CD14-positive monocyte (primary cell): ENCODE measurements at regions of chr19 and their contacts with region 1.

Region 1: DNA sequence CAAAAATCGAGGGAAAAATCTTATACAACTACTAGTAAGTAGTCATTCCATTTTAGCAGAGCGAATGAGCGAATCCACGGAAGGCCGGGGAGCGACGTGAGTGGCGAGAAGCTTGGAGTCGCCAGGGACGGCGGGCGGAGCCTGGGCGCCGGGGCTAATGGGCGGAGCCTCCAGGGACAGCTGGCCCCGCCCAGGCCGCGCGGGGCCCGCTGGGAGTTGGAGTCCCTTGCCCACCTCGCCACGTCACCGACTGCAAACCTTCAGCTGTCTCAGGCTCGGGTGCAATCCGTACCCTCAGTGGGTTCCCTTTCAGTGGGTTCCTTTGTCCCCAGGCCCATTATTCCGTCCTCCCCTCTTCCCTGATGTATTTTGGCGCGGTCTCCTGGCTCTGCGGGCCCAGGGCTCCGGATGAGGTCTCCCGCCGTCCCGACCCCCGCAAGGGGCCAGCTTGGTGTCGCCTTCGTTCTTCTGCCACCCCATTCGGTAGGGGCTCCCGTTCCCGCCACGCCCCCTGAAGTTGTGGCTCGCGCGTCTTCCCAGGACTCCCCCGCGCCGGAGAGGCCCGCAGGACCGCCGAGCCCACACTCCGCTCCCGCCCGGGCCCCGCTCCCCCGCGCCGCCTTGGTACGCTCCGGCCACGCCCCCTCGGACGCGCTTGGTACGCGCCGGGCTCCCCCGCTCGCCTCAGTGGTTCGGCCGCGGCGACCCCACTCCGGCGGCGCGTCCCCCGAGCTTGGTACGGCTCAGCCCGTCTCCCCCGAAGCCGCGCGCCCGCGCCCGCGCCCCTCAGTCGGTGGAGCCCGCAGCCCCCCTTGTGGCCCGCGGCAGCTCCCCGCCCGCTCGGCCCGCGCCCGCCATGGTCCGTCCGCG is at the start of gene PTOV1:
- DNase-seq: peak; percentile 88 to 90 (median 88)
- H3K4me3 ChIP-seq: peak within 1 kb of the TSS; percentile 84 to 99 (median 96)
- H3K4me3 Mint-ChIP-seq: peak within 1 kb of the TSS; percentile 88 to 92
- H3K27ac ChIP-seq: peak within 1 kb of the TSS; percentile 95 to 97
- H3K27ac Mint-ChIP-seq: peak within 1 kb of the TSS; percentile 93 to 99 (median 96)
- H3K4me1 ChIP-seq: peaks cover 32 to 40% of the 10 kb centered on the region in 2 donors
- H3K4me1 Mint-ChIP-seq: peaks cover 42% of the 10 kb centered on the region
- H3K27me3 ChIP-seq: peaks cover 7 to 12% of the 10 kb centered on the region in 2 donors
- H3K27me3 Mint-ChIP-seq: peaks cover 14 to 17% (median 15%) of the 10 kb centered on the region in 3 donors
- CTCF ChIP-seq: no peak
- polyA plus RNA-seq, gene PTOV1: 18.3 to 67.9 (median 31.2) TPM

Region 2: DNA sequence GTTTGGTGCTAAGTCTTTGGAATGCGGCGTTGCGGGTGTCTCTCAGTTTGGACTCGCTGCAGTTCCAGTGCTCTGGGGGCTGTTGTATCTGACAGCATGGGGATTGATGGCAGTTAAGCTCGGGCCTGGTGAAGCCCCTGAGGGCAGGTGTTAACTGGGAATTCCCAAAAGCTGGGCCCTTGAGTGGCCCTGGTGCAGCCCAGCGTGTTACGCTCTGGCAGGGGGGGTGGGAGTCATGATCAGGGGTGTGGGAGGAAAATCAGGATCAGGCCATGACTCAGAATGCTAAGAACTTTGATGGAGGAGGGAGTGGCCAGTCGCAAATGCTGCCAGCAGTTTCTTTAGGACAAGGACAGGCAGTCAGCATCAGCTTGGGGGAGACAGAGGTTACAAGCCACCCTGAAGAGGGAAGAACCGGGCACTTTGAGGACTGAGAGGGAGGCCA is 64.3 kb before region 1 on chr19:
- intact Hi-C with region 1: no loop called
- DNase-seq: no peak
- H3K4me3 ChIP-seq: no peak overlapping the region
- H3K4me3 Mint-ChIP-seq: no peak overlapping the region
- H3K27ac ChIP-seq: peak overlapping the region in 1 of 2 donors; percentile 11
- H3K27ac Mint-ChIP-seq: peak overlapping the region in 2 of 7 donors; percentile 32 to 50
- H3K4me1 ChIP-seq: peaks cover 10 to 12% of the 10 kb centered on the region in 2 donors
- H3K4me1 Mint-ChIP-seq: peaks cover 11% of the 10 kb centered on the region
- H3K27me3 ChIP-seq: no peaks in the 10 kb centered on the region
- H3K27me3 Mint-ChIP-seq: no peaks in the 10 kb centered on the region
- CTCF ChIP-seq: no peak

Region 3: GRCh38 chr19:49817964-49818648 is 32.6 kb before region 1 on chr19 and contains the start of gene MED25:
- intact Hi-C with region 1: loop called (anchors 2 to 5 kb)
- DNase-seq: peak; percentile 81 to 89 (median 83)
- H3K4me3 ChIP-seq: peak within 1 kb of the TSS; percentile 70 to 100 (median 89)
- H3K4me3 Mint-ChIP-seq: peak within 1 kb of the TSS; percentile 96 to 100
- H3K27ac ChIP-seq: peak within 1 kb of the TSS; percentile 75 to 93
- H3K27ac Mint-ChIP-seq: peak within 1 kb of the TSS; percentile 97 to 100 (median 99)
- H3K4me1 ChIP-seq: peaks cover 23 to 27% of the 10 kb centered on the region in 2 donors
- H3K4me1 Mint-ChIP-seq: peaks cover 22% of the 10 kb centered on the region
- H3K27me3 ChIP-seq: no peaks in the 10 kb centered on the region
- H3K27me3 Mint-ChIP-seq: peaks cover 0 to 8% (median 0%) of the 10 kb centered on the region in 3 donors
- CTCF ChIP-seq: peak; percentile 23
- polyA plus RNA-seq, gene MED25: 13.9 to 52.9 (median 18.5) TPM

Region 4: GRCh38 chr19:49968279-49968922 is 117.7 kb after region 1 on chr19:
- intact Hi-C with region 1: no loop called
- DNase-seq: peak; percentile 73 to 89 (median 88)
- H3K4me3 ChIP-seq: peak overlapping the region in 1 of 3 experiments; percentile 70
- H3K4me3 Mint-ChIP-seq: peak overlapping the region in 1 of 2 donors; percentile 39
- H3K27ac ChIP-seq: peak overlapping the region; percentile 77 to 80
- H3K27ac Mint-ChIP-seq: peak overlapping the region; percentile 72 to 96 (median 91)
- H3K4me1 ChIP-seq: peaks cover 63 to 71% of the 10 kb centered on the region in 2 donors
- H3K4me1 Mint-ChIP-seq: peaks cover 58% of the 10 kb centered on the region
- H3K27me3 ChIP-seq: no peaks in the 10 kb centered on the region
- H3K27me3 Mint-ChIP-seq: peaks cover 4 to 12% (median 7%) of the 10 kb centered on the region in 3 donors
- CTCF ChIP-seq: no peak